RWPE1 (cell line): ENCODE measurements at regions of chr19 and their contacts with region 1.

Region 1: DNA sequence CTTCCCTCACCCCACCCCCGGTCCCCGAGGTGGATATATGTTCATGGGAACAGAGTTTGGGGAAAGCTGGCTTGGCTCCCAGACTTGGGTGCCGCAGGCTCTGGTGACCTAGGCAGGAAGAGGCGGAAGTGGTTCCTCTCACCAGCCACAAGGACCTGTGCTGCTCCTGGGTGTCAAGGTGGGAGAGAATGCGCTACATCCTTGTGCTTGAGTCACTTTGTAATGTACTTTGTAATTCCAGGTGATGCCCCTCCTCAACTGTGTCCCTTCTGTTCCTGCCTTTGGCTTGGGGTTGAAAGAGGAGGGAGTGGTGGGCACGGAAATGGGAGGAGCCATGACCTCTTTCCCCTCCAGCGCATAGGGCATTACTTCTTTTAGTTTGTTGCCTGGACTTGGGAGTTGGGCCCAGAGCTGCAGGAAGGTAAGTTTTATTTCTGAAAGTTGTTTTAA is 10.9 kb downstream of the GARRE1 start:
- DNase-seq: peak; percentile 45
- H3K27ac ChIP-seq: peak overlapping the region; percentile 47; the same call in 1 of the 2 replicates
- CTCF ChIP-seq: no peak

Region 2: GRCh38 chr19:34278783-34279182 is 13.6 kb after region 1 on chr19:
- CTCF ChIA-PET with region 1: interaction called, 10 read pairs
- POLR2A ChIA-PET with region 1: no interaction called
- DNase-seq: no peak
- H3K27ac ChIP-seq: no peak overlapping the region
- CTCF ChIP-seq: no peak